ENCODE measurements at regions of chr12 and their contacts with region 1.

Region 1: DNA sequence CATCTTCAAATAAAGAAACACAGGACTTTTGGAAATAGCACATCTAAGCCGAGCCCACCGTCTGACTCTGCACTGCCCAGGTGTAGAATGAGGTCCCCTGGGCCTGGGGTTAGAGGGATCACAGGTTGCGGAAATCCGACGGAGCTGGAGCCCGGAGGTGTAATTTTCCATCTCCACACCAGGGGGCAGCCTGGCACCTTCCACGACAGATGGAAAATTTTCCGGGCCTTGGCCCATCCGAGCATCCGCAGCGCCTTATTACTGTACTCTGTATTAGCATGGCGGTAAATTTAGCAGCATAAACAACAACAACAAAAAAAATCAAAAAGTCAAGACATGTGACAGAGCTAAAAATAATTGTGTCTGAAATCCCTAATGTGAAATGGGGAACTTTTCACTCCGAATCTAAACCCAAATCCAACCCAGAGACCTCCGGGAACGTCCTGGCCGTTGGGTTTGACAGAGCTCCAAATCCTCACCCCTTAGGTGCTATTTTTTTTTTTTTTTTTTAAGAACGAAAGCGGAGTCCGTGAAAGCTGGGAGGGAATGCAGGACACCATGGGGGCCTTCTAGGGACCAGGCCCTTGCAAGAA is 93.9 kb downstream of the KSR2 start:
- DNase-seq: peak; percentile 54
- H3K4me3 ChIP-seq: no peak overlapping the region
- H3K27ac ChIP-seq: no peak overlapping the region
- H3K4me1 ChIP-seq: no peaks in the 10 kb centered on the region
- CTCF ChIP-seq: peak; percentile 91

Region 2: DNA sequence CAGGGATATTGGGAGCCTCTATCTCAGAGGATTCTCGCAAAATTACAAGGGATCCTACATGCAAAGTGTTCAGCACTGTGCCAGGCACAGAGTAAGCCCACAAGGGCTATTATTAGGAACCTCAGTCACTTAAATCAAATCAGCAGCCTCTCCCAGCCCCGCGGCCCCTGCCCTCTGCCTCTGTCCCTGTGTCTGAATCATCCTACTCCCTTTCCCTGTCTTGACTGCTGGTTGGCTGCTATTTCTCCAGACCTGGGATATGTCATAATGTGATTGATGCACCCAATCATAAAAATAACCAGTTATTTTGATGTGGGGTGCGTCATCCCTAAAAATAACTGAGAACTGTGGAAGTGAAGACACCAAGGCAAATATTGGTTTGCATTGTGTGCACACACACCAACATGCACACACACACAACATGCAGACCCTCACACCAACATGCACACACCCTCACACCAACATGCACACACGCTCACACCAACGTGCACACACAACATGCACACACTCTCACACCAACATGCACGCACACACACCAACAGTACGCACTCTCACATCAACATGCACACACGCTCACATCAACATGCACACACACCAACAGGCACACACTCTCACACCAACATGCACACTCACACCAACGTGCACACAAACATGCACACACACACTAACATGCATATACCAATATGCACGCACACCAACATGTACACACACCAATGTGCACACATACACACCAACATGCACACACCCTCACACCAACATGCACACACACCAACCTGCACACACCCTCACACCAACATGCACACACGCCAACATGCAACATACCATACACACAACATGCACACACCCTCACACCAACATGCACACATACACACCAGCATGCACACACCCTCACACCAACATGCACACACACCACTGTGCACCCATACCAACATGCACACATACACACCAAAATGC is 82.2 kb before region 1 on chr12:
- CTCF ChIA-PET with region 1: no interaction called
- POLR2A ChIA-PET with region 1: no interaction called
- intact Hi-C with region 1: no loop called
- DNase-seq: no peak
- H3K4me3 ChIP-seq: no peak overlapping the region
- H3K27ac ChIP-seq: no peak overlapping the region
- H3K4me1 ChIP-seq: no peaks in the 10 kb centered on the region
- CTCF ChIP-seq: no peak

Region 3: DNA sequence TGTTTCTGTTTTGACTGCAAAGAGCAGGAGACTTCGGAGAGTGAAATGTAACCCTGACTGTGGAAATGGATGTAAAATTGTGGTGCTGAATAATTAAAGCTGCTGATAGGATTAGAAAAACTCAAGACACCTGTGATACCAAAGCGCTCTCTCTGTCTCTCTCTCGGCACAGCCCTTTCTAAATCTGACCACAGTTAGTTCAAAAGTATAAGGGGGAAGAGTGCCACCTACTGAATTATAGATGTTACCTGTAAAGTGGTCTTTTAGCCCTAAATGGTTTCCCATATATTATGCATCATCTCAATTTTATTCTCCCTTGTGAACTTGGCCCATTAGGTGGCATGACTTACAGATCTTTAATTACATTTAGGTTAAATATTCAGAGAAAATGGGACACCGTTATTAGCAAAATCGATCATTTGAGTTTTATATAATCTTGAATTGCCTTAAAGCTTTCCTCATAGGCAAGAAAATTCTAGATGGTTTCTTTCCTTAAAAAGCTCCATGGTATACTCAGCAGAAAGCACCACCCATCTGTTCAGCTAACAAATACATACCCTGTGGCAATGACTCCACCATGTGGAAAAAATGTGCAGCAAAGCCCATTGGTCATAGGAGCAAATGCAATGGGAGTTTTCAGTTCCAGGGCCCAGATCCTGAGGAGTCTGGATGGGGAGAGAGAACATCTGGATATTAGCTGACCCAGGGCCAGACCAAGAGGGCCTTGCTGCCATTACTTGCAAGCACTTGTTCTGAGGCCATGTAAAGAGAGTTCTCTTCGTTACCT is 159.7 kb after region 1 on chr12:
- CTCF ChIA-PET with region 1: no interaction called
- POLR2A ChIA-PET with region 1: no interaction called
- intact Hi-C with region 1: loop called (anchors 5 kb)
- DNase-seq: no peak
- H3K4me3 ChIP-seq: no peak overlapping the region
- H3K27ac ChIP-seq: no peak overlapping the region
- H3K4me1 ChIP-seq: peaks cover 9% of the 10 kb centered on the region
- CTCF ChIP-seq: peak; percentile 57

Region 4: DNA sequence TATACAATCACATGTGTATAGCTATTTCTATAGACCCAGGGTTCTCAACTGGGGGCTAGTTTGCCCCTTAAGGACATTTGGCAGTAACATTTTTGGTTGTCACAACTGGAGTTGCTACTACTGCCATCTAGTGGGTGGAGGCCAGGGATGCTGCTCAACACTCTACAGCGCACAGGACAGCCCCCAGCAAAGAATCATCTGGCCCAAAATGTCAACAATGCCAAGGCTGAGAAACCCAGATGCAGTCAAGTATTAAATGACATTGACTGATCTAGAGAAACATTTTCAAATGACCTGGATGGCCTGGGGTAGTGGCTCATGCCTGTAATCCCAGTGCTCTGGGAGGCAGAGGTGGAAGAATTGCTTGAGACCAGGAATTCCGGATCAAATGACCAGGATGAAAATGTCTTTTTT is 180.2 kb after region 1 on chr12:
- CTCF ChIA-PET with region 1: no interaction called
- POLR2A ChIA-PET with region 1: no interaction called
- intact Hi-C with region 1: loop called (anchors 5 kb)
- DNase-seq: peak; percentile 79
- H3K4me3 ChIP-seq: no peak overlapping the region
- H3K27ac ChIP-seq: no peak overlapping the region
- H3K4me1 ChIP-seq: peaks cover 8% of the 10 kb centered on the region
- CTCF ChIP-seq: peak; percentile 90

Measured in OCI-LY7 (cell line).